Panc1 (cell line): ENCODE measurements at regions of chr3 and their contacts with region 1.

Region 1: GRCh38 chr3:196609343-196609775 is 30.1 kb upstream of the NRROS start:
- DNase-seq: peak; percentile 22
- ATAC-seq: peak; percentile 94
- H3K4me3 ChIP-seq: no peak overlapping the region
- H3K27ac ChIP-seq: peak overlapping the region; percentile 58; the same call in 1 of the 2 replicates
- H3K4me1 ChIP-seq: peaks cover 12% of the 10 kb centered on the region
- H3K27me3 ChIP-seq: no peaks in the 10 kb centered on the region
- CTCF ChIP-seq: peak; percentile 94

Region 2: DNA sequence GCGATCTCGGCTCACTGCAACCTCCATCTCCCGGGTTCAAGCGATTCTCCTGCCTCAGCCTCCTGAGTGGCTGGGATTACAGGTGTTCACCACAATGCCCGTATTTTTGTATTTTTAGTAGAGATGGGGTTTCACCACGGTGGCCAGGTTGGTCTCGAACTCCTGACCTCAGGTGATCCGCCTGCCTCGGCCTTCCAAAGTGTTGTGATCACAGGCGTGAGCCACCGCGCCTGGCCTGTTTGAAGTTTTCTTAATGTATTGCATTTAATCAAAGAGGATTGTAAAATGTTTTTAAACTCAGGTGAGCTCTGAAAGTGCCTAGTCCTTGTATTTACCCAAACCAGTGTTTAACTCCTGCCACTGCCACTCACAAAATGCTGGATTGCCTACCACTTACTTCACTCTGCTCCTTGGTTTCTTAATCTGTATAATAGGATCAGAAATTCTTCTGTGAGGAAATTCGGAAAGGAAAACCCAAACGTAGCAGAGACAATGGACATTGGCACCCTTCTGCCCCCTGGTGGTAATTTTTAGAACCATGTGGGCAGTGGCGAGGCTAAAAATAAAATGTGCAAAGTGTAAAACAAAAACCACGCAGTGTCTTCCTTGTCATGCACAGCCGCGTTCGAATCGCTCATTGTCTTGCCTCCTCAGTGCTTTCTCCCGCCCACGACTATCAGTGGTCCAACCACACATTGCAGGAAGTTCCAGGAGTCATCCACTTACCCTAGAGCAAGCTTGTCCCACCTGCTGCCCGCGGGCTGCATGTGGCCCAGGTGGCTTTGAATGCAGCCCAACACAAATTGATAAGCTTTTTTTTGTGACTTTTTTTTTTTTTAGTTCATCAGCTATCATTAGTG is 75.4 kb after region 1 on chr3:
- CTCF ChIA-PET with region 1: interaction called, 10 read pairs
- POLR2A ChIA-PET with region 1: no interaction called
- in situ Hi-C with region 1: no loop called
- intact Hi-C with region 1: loop called (anchors 1 kb)
- DNase-seq: peak; percentile 52
- ATAC-seq: peak; percentile 90
- H3K4me3 ChIP-seq: peak overlapping the region in 1 of 2 experiments; percentile 11; a peak in 1 of 4 replicates
- H3K27ac ChIP-seq: peak overlapping the region; percentile 49
- H3K4me1 ChIP-seq: peaks cover 7% of the 10 kb centered on the region
- H3K27me3 ChIP-seq: no peaks in the 10 kb centered on the region
- CTCF ChIP-seq: peak; percentile 93